ENCODE measurements at regions of chr17 and their contacts with region 1.

Region 1: DNA sequence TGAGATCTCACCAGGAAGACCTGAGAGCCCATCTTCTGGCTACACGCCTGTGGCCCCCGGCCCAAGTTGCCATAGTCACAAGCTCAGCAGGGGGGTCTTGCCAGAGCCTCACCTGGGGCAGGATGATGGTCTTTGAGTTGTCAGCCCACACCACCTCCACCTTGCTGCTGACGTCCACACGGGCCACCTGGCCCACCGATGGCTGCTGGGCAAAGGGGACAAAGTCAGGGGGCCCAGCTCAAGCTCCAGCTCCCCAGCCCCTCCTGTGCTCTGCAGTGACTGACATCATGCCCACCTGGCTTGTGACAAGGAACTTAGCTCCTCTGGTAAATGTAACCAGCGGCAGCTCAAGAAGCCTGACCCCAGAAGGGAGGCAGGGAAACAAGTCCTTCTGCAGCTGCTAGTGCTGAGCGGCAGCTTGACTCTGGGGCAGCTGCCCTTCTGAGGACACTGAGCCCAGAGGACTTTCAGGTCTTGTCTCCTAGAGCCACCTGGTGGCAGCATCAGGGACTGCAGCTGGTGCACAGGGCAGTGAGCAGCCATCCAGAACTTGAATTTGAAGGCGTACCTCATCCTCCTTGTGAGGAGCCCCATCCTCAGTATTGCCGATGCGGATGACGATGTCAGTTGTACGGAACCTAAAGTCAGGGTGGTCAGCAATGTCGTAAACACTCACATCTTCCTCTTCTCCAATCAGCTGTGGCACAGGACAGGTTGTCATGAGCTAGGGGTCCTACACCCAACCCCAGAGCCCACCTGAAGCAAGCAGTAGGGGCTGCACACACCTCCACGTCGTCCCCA is 13.5 kb downstream of the SPHK1 start:
- DNase-seq: peak; percentile 71 to 98 (median 94)

Region 2: DNA sequence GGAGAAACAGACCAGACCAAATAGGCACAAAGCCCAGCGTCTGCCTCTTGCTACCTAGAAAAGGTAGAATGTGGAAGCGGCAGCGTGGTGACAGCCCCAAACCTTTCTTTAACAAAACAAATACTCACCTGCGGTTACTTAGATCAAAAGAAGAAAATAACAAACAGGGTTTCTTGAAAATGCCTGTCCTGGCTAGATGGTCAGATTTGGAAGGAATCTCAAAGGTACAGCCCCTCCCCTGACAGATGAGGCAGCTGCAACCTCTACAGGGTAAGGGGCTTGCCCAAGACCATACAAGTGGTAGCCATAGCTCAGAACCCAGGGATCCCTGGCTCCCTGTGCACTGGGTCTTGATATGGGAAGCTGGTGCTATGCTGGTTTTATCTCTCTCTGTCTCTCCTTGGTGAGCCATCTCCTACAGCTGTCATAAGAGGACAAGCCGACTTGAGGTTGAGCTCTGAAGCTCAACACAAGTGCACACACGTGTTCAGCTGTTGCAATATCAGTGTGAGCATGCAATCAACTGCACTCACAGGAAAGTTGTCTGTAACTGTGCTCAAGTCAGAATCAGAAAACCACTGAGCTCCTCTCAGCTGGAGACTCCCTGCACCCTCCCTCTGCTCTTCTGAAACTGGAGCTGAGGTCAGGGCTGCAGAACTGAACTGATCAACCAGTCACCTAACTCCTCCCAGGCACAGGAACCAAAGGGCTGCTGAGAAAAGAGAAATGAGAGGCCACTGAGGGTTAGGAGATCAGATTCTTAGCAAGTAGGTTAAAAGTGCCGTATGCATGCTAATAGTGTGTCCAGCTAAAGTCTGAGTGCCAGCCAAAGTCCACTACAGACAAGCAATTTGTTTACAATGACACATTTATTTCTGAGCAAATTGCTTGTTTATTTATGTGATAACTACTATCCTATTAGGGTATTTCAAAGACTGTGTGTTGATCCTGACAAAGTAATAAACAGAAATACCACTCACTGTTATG is 151.5 kb before region 1 on chr17:
- intact Hi-C with region 1: no loop called
- DNase-seq: peak in 1 of 42 donors; percentile 12

Region 3: GRCh38 chr17:76307299-76307965 is 90.5 kb before region 1 on chr17:
- intact Hi-C with region 1: loop called (anchors 5 kb)
- DNase-seq: no peak

Measured in head of caudate nucleus (tissue), 42 donors.